ENCODE measurements at regions of chr15 and their contacts with region 1.

Region 1: DNA sequence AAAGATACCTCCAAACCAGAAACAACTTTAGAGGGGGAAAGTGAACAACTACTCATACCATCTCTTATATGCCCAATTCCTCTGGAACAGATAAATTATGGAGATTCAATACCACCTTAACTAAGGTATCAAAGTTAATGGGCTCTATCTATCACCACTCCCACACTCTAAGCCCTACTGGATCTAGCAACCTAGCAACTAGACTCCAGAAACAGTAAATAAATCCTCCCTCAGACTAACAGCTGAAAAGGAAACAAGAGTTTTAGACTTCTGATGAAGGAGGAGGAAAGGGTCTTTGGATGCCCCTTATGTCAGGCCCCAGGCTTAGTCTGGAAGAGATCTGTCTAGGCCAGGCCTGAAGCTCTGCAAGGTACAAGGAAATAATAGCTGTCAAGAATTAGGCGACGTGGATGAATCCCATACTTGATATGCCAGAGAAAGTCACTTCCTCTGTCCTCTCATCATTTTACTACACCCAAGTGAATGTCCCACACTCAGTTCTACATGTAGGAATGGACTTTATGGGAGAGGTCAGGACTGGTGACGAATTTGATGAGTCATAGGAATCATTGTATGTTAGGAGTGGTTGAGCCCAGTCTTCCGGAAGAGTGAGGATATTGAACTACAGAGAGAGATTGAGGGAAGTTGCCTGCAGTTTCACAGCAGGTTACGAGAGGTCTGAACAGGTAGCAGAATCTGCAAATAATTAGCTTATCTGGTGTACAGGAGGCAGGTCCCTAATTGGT is 113.8 kb downstream of the AKAP13 start:
- DNase-seq: peak; percentile 48
- H3K4me3 ChIP-seq: no peak overlapping the region
- H3K27me3 ChIP-seq: no peaks in the 10 kb centered on the region
- CTCF ChIP-seq: no peak

Region 2: DNA sequence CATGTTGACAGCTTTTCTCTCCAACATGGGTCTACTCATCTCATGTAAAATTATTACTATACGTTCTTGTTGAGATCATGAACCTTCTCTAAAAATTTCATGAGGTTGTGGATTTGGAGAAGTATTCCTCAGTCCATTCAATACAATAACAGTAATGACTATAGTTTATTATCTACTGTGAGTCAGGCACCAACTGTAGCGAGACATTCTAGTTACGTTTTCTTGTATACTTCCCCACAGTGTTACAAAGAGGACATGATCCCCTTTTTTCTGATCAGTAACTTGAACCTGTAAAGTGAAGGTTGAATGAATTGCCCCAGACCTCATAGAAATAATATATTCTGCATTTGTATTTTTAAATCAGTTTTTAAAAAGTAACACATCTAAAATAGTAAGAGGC is 37.4 kb before region 1 on chr15:
- CTCF ChIA-PET with region 1: no interaction called
- POLR2A ChIA-PET with region 1: no interaction called
- DNase-seq: no peak
- H3K4me3 ChIP-seq: no peak overlapping the region
- H3K27me3 ChIP-seq: no peaks in the 10 kb centered on the region
- CTCF ChIP-seq: no peak

Region 3: DNA sequence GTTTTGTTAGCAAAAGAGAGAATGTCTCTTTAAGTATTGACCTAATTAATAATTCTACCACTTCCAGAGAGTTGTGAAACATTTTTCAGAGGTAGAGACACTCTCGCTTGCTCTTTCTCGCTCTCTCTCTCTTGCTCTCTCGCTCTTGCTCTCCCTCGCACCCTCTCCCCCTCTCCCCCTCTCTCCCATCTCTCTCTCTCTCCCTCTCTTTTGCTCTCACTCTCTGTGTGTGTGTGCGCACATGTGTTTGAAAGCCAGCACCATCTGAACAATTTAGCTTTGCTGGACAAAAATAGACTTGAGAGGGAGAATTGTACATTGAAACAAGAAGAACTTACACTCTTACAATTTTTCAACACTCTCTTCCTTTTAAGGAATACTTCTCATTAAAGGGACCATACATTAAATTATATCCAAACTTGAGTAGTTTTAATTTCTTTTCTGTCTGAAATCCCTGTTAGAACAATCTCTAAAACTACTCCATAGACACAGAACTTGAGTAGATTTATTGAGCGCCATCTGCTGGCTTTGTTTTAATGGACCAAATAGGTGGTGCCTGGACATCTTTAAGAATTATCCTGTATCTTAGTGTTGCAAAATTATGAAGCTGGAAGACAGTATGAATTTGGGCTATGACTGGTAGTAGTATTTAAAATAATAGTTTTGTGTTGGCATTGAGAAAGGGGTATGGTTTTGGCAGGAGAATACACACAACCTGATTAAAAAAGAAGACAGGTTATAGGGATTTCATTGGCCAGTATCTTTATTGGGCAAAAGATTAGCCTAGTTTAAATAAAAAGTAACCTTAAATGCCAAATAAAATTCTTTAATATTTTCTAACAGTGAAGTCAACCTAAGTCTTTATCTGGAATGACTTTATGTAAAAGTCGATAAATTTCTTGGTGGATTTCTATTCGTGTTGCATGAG is 10.8 kb after region 1 on chr15:
- CTCF ChIA-PET with region 1: interaction called, 25 read pairs
- POLR2A ChIA-PET with region 1: no interaction called
- DNase-seq: no peak
- H3K4me3 ChIP-seq: no peak overlapping the region
- H3K27me3 ChIP-seq: no peaks in the 10 kb centered on the region
- CTCF ChIP-seq: peak; percentile 66

Measured in BJ (cell line).